ENCODE measurements at regions of chr7 and their contacts with region 1.

Region 1: GRCh38 chr7:4775250-4775847 is at the start of gene AP5Z1:
- DNase-seq: peak; percentile 98
- ATAC-seq: peak; percentile 93
- H3K4me3 ChIP-seq: peak within 1 kb of the TSS; percentile 87 to 97 (median 95)
- H3K4me3 Mint-ChIP-seq: peak within 1 kb of the TSS; percentile 97
- H3K27ac ChIP-seq: peak within 1 kb of the TSS; percentile 94 to 95
- H3K27ac Mint-ChIP-seq: peak within 1 kb of the TSS; percentile 99
- H3K4me1 ChIP-seq: peaks cover 14 to 26% of the 10 kb centered on the region in 2 donors
- H3K4me1 Mint-ChIP-seq: peaks cover 39% of the 10 kb centered on the region
- H3K27me3 ChIP-seq: no peaks in the 10 kb centered on the region
- H3K27me3 Mint-ChIP-seq: no peaks in the 10 kb centered on the region
- CTCF ChIP-seq: no peak
- total RNA-seq, gene AP5Z1: 108 and 113 TPM in 2 replicates

Region 2: DNA sequence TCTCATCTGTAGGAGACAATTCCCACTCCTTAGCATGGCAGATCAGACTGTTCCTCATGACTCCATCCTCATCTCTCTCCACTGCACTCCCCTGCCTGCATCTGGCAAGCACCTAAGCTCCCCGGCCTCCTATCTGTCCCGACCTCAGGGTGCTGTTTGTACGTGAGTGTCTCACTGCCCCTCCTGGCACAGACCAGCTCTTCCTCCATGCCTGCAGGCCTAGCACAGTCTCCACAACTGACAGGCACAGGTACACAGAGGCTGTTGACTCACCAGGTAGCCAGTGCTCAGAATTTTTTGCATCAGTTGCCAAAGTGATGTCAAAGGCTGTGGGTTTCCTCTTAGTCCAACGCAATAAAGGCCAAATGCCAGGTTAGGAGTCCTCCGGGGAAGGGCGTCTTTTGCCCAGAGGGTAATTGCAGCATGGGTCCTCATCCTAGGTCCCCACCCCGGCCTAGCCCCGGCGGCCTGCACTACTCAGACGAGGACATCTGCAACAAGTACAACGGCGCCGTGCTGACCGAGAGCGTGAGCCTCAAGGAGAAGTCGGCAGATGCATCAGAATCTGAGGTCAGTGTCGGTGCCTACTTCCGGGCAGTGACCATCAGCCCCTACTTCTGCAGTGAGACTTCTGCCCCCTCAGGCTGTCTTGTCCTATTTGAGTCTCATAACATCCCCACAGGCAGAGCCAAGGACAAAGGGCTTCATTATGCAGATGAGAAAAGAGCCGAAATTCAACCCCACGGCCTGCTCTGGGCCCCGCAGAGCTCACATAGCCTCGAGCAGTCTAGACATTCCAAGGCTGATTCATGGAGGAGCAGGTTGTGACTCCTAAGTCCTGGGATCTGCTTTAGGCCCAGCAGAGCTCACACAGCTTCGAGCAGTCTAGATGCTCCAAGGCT is 529.9 kb before region 1 on chr7:
- CTCF ChIA-PET with region 1: no interaction called
- POLR2A ChIA-PET with region 1: no interaction called
- intact Hi-C with region 1: no loop called
- DNase-seq: no peak
- ATAC-seq: no peak
- H3K4me3 ChIP-seq: no peak overlapping the region
- H3K4me3 Mint-ChIP-seq: no peak overlapping the region
- H3K27ac ChIP-seq: no peak overlapping the region
- H3K27ac Mint-ChIP-seq: no peak overlapping the region
- H3K4me1 ChIP-seq: no peaks in the 10 kb centered on the region
- H3K4me1 Mint-ChIP-seq: no peaks in the 10 kb centered on the region
- H3K27me3 ChIP-seq: no peaks in the 10 kb centered on the region
- H3K27me3 Mint-ChIP-seq: no peaks in the 10 kb centered on the region
- CTCF ChIP-seq: no peak

Region 3: DNA sequence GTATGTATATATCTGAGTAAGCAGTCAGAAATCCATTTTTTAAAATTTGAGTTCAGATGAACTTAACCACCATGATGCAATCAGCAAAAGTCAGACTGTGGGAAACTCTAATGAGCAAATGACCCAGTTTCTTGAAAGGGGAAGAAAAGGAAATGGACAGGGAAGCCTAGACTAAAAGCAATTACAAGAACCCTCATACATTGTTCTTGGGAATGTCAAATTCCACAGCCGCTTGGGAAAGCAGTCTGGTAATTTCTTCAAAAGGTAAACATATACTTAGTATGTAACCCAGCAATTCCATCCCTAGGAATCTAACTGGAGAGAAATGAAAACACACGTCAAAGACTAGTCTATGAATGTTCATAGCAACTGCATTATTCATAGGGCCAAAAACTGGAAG is 109.7 kb before region 1 on chr7:
- CTCF ChIA-PET with region 1: no interaction called
- POLR2A ChIA-PET with region 1: interaction called, 10 read pairs
- intact Hi-C with region 1: no loop called
- DNase-seq: no peak
- ATAC-seq: no peak
- H3K4me3 ChIP-seq: no peak overlapping the region
- H3K4me3 Mint-ChIP-seq: no peak overlapping the region
- H3K27ac ChIP-seq: no peak overlapping the region
- H3K27ac Mint-ChIP-seq: no peak overlapping the region
- H3K4me1 ChIP-seq: no peaks in the 10 kb centered on the region
- H3K4me1 Mint-ChIP-seq: no peaks in the 10 kb centered on the region
- H3K27me3 ChIP-seq: peaks cover 0 to under 1% (median 0%) of the 10 kb centered on the region in 4 experiments
- H3K27me3 Mint-ChIP-seq: peaks cover 7% of the 10 kb centered on the region
- CTCF ChIP-seq: no peak

Region 4: DNA sequence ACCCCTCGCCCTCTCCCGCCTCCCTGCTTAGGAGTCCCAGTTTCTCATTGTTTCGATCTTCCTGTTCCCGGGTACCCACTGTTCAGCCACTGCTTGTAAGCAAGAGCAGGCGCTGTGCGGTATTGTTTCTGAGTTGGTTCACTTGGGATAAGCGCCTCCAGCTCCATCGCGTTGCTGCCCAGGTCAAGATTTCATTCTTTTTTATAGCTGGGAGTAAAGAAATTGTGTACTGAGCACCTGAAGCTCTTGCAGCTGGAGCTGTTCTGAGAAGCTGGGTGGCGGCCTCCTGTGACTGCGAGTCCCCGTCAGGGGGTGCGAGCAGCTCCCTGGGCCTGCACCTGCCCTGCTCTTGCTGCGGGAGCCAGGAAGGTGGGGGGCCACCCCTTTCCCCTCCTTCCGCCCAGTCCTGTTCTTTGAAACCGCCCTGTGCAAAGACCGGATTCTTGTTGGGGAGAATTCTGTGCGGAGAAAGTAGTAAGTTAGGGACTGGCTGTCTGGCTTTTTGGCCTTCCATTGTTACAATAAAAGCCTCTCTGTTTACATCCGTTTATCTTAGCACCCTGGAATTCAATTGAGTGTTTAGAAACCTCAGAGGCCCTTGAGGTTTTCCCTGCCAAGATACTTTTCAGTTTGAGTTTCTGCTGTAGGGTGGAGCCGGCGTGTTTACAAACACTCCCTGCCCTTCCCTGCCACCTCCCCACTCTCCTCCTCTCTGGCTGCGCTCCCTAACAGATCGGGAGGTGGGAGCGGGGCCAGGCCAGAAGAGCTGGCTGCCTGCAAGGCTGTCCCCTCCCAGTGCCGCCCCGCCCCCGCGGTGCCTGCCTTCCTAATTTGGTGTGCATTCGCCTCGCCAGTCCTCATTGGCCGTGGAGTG is 30.7 kb before region 1 on chr7:
- CTCF ChIA-PET with region 1: interaction called, 3 read pairs
- POLR2A ChIA-PET with region 1: interaction called, 10 read pairs
- intact Hi-C with region 1: loop called (anchors 1 kb)
- DNase-seq: peak; percentile 69
- ATAC-seq: peak; percentile 84
- H3K4me3 ChIP-seq: peak overlapping the region in 4 of 5 experiments; percentile 36 to 61 (median 52)
- H3K4me3 Mint-ChIP-seq: peak overlapping the region; percentile 82
- H3K27ac ChIP-seq: peak overlapping the region; percentile 70 to 78
- H3K27ac Mint-ChIP-seq: peak overlapping the region; percentile 95
- H3K4me1 ChIP-seq: peaks cover 21 to 45% of the 10 kb centered on the region in 2 donors
- H3K4me1 Mint-ChIP-seq: peaks cover 49% of the 10 kb centered on the region
- H3K27me3 ChIP-seq: no peaks in the 10 kb centered on the region
- H3K27me3 Mint-ChIP-seq: no peaks in the 10 kb centered on the region
- CTCF ChIP-seq: no peak

Region 5: DNA sequence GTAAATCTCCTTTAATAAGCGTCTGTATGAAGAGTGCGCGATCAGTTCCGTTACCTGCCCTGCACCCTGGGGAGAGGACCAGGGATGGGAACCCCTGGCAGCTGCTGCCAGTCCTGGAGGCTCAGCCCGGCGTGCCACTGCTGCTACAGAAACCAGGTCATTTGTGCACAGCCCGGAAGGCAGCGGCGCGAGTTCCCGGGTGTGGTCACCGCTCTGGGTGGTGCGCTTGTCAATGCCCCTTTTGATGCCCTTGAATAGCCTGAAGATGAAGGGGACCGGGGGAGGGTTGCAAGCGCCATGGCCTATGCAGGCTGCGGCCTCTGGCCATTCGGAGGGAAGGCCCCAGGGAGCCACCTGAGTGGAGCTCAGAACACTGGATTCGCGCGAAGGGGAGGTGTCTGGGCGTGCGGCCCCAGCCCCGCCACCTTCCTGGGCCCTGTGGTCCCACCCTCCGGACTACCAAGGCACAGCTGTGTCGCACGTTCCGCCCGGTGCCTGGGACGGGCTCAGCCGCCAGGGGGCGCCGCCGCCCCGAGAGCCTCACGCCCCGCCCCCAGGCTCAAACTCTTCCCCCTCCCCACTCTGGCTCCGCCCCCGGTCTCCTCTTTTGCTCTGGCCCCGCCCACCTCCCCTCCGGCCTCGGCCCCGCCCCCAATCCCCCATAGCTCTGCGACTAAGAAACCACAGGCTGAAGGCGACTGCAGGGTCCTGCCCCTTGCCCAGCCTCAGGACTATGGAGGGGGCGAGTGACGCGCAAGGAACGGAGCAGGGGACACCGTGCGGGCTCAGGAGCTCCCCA is 16.6 kb after region 1 on chr7:
- CTCF ChIA-PET with region 1: interaction called, 14 read pairs
- POLR2A ChIA-PET with region 1: interaction called, 9 read pairs
- intact Hi-C with region 1: loop called (anchors 1 kb)
- DNase-seq: peak; percentile 87
- ATAC-seq: peak; percentile 94
- H3K4me3 ChIP-seq: peak overlapping the region in 4 of 5 experiments; percentile 47 to 63 (median 61)
- H3K4me3 Mint-ChIP-seq: peak overlapping the region; percentile 61
- H3K27ac ChIP-seq: no peak overlapping the region
- H3K27ac Mint-ChIP-seq: no peak overlapping the region
- H3K4me1 ChIP-seq: peaks cover 0 to 9% of the 10 kb centered on the region in 2 donors
- H3K4me1 Mint-ChIP-seq: peaks cover 2% of the 10 kb centered on the region
- H3K27me3 ChIP-seq: no peaks in the 10 kb centered on the region
- H3K27me3 Mint-ChIP-seq: no peaks in the 10 kb centered on the region
- CTCF ChIP-seq: peak; percentile 79